ENCODE measurements at regions of chr1 and their contacts with region 1.

Region 1: GRCh38 chr1:28956038-28956464 is 41.7 kb downstream of the EPB41 start:
- DNase-seq: peak; percentile 39
- ATAC-seq: peak; percentile 95
- H3K4me3 Mint-ChIP-seq: no peak overlapping the region
- H3K27ac Mint-ChIP-seq: peak overlapping the region; percentile 32
- H3K4me1 Mint-ChIP-seq: peaks cover 47% of the 10 kb centered on the region
- H3K27me3 Mint-ChIP-seq: no peaks in the 10 kb centered on the region

Region 2: GRCh38 chr1:28160782-28161266 is 795.2 kb before region 1 on chr1:
- CTCF ChIA-PET with region 1: no interaction called
- POLR2A ChIA-PET with region 1: no interaction called
- intact Hi-C with region 1: no loop called
- DNase-seq: no peak
- ATAC-seq: no peak
- H3K4me3 Mint-ChIP-seq: no peak overlapping the region
- H3K27ac Mint-ChIP-seq: no peak overlapping the region
- H3K4me1 Mint-ChIP-seq: no peaks in the 10 kb centered on the region
- H3K27me3 Mint-ChIP-seq: peaks cover 30% of the 10 kb centered on the region

Region 3: DNA sequence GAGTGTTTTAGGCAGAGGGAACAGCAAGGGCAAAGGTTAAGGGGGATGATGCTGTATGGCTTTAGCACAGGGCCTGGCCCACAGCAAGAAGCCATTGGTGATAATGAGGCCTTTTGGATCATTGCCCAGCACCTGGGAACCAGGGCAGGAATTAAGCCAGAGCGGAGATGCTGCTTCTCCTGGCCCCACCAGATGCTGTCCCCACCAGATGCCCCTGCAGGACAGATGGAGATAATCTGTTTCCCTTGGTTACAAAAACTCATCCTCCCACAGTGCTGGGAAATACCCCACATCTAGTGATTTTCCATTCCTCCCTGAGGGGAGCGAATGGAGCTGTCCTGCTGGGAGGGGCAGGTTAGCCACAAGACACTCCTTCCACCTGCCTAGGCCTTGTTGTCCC is 125.2 kb before region 1 on chr1:
- CTCF ChIA-PET with region 1: no interaction called
- POLR2A ChIA-PET with region 1: no interaction called
- intact Hi-C with region 1: no loop called
- DNase-seq: no peak
- ATAC-seq: no peak
- H3K4me3 Mint-ChIP-seq: no peak overlapping the region
- H3K27ac Mint-ChIP-seq: no peak overlapping the region
- H3K4me1 Mint-ChIP-seq: no peaks in the 10 kb centered on the region
- H3K27me3 Mint-ChIP-seq: peaks cover under 1% of the 10 kb centered on the region

Region 4: DNA sequence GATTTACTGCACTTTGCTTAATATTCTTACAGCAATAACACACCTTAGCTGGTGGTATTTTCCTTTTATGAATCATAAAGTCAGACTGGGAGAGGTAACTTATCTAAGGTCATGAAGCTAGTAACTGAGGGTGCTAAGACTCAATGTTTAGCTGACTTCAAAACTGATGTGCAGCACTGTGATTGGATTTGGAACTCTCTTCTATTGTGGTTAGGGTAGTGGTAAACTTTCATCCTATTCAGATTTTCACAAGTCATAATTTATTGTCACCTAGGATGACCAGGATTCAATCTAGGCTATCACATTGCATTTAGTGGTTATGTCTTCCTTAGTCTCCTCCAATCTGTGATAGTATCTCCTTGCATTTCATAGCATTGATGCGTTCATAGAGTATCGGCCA is 22.8 kb before region 1 on chr1:
- CTCF ChIA-PET with region 1: interaction called, 3 read pairs
- POLR2A ChIA-PET with region 1: interaction called, 6 read pairs
- intact Hi-C with region 1: loop called in 1 of 2 experiments (anchors 2 kb)
- DNase-seq: no peak
- ATAC-seq: peak; percentile 84
- H3K4me3 Mint-ChIP-seq: no peak overlapping the region
- H3K27ac Mint-ChIP-seq: peak overlapping the region; percentile 56
- H3K4me1 Mint-ChIP-seq: peaks cover 71% of the 10 kb centered on the region
- H3K27me3 Mint-ChIP-seq: no peaks in the 10 kb centered on the region

Region 5: DNA sequence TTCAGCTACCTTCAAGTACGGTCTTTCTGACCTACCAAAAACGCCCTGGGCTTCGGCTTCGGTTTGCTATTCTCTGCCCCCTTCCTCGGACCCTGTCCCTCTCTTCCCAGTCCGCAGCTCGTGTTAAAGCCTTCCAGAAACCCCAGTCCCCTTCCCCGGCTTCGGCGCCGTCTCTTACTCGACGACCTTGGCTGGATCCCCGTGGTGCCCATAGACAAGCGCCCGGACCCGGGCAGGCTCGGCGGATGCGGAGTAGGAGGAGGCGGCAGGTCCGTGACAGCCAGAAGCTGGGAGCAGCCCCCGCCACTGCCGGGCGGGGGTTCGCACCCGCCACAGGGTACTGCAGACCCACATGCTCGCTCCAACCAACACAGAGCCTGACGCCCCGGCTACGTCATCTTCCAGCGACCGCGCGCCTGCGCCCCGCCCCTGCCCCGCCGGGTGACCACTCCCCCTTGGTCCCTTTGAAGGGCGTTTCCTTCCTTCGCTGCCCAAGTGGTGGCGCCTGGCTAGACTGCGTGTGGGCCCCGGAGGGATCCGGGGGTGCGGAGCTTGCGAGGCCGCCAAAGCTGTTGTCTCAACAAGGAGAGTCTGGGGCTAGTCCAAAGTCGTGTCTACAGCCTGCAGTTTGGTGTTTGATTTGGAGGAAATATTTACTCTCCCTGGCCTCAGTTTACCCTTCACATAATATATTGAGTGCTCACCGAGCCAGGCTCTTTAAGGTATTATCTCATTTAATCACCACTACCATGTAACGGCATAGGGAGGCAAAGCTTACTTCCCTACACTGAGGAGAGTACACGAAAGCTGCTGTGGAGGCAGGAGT is 274.7 kb after region 1 on chr1 and contains the start of gene MECR:
- CTCF ChIA-PET with region 1: no interaction called
- POLR2A ChIA-PET with region 1: no interaction called
- intact Hi-C with region 1: no loop called
- DNase-seq: peak; percentile 97
- ATAC-seq: peak; percentile 97
- H3K4me3 Mint-ChIP-seq: peak within 1 kb of the TSS; percentile 94
- H3K27ac Mint-ChIP-seq: peak within 1 kb of the TSS; percentile 94
- H3K4me1 Mint-ChIP-seq: peaks cover 18% of the 10 kb centered on the region
- H3K27me3 Mint-ChIP-seq: peaks cover 9% of the 10 kb centered on the region
- total RNA-seq, gene MECR: 41.3 to 43.1 TPM

Measured in activated CD4-positive, alpha-beta T cell treated with anti-CD3 and anti-CD28 coated beads for 36 hours (primary cell).